ENCODE measurements at regions of chr9 and their contacts with region 1.

Region 1: GRCh38 chr9:2837915-2838314 is 6.0 kb downstream of the PUM3 start:
- DNase-seq: no peak
- H3K4me3 ChIP-seq: peak overlapping the region; percentile 2
- H3K27ac ChIP-seq: peak overlapping the region in 1 of 2 donors; percentile 76
- H3K4me1 ChIP-seq: peaks cover 11% of the 10 kb centered on the region
- H3K27me3 ChIP-seq: no peaks in the 10 kb centered on the region
- CTCF ChIP-seq: peak; percentile 25 to 55 (median 46)
- EP300 ChIP-seq: no peak
- POLR2A ChIP-seq: no peak

Region 2: DNA sequence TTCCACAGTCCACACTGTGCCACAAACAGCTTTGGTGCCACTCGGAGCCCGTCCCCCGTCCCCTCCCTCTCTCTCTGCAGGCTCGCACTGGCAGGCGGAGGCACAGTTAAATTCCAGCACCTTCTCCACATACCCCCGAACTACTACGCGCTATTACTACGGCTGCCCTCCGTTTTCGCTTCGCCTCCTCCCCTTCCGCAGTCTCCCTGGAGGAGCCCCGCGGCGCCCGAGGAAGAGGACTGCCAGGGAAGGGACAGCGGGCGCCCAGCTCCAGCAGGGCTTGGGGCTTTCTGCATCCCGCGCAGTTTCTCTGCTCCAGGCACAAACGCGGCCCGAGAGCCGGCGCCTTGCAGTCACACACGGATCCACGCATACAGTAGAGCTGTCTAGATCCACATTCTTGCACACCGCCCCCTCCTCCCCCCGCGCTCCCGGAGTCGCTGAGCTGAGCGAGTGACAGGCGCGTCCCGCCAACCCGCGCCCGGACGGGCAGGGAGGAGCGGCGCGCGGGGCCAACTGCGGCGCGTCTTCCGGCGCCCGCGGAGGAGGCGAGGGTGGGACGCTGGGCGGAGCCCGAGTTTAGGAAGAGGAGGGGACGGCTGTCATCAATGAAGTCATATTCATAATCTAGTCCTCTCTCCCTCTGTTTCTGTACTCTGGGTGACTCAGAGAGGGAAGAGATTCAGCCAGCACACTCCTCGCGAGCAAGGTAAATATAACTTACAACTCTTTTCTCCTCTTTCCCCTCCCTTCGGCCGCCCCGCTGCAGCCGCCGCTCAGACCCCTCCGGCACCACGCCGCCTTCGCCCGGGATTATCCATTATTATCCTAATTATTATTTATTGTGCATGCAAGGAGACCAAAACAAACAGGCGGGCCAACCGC is 823.0 kb before region 1 on chr9 and contains the start of gene SMARCA2:
- intact Hi-C with region 1: loop called in 1 of 4 experiments (anchors 5 kb)
- DNase-seq: peak; percentile 97 to 98 (median 98)
- H3K4me3 ChIP-seq: peak within 1 kb of the TSS; percentile 69
- H3K27ac ChIP-seq: peak within 1 kb of the TSS; percentile 85 to 98
- H3K4me1 ChIP-seq: peaks cover 2% of the 10 kb centered on the region
- H3K27me3 ChIP-seq: no peaks in the 10 kb centered on the region
- CTCF ChIP-seq: no peak
- EP300 ChIP-seq: no peak
- POLR2A ChIP-seq: peak; percentile 84
- total RNA-seq, gene SMARCA2: 153 to 404 (median 199) TPM

Region 3: GRCh38 chr9:2132484-2133082 is 705.3 kb before region 1 on chr9:
- intact Hi-C with region 1: loop called in 3 of 4 experiments (anchors 10 kb)
- DNase-seq: no peak
- H3K4me3 ChIP-seq: no peak overlapping the region
- H3K27ac ChIP-seq: no peak overlapping the region
- H3K4me1 ChIP-seq: peaks cover 12% of the 10 kb centered on the region
- H3K27me3 ChIP-seq: no peaks in the 10 kb centered on the region
- CTCF ChIP-seq: peak; percentile 51 to 93 (median 82)
- EP300 ChIP-seq: no peak
- POLR2A ChIP-seq: no peak

Region 4: DNA sequence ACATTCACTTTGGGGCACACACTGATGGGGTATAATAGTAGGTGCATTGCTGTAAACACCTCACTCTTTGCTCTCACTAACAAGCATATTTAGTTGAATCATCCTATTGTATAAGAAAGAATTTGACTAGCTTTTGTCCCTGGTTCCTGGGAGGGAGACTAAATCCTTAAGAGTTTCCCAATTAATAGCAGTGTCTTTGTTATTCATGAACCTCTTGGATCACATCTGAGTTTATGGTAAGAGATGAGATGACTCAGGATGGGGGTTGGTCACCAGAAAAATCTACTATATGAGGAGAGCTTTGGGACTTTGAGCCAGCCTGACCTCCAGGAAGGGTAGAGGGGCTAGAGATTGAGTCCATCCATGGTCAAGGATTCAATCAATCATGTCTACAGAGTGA is 50.9 kb before region 1 on chr9:
- intact Hi-C with region 1: no loop called
- DNase-seq: no peak
- H3K4me3 ChIP-seq: no peak overlapping the region
- H3K27ac ChIP-seq: no peak overlapping the region
- H3K4me1 ChIP-seq: no peaks in the 10 kb centered on the region
- H3K27me3 ChIP-seq: no peaks in the 10 kb centered on the region
- CTCF ChIP-seq: no peak
- EP300 ChIP-seq: no peak
- POLR2A ChIP-seq: no peak